Dorsolateral prefrontal cortex (tissue), 120 donors: ENCODE measurements at regions of chr19 and their contacts with region 1.

Region 1: DNA sequence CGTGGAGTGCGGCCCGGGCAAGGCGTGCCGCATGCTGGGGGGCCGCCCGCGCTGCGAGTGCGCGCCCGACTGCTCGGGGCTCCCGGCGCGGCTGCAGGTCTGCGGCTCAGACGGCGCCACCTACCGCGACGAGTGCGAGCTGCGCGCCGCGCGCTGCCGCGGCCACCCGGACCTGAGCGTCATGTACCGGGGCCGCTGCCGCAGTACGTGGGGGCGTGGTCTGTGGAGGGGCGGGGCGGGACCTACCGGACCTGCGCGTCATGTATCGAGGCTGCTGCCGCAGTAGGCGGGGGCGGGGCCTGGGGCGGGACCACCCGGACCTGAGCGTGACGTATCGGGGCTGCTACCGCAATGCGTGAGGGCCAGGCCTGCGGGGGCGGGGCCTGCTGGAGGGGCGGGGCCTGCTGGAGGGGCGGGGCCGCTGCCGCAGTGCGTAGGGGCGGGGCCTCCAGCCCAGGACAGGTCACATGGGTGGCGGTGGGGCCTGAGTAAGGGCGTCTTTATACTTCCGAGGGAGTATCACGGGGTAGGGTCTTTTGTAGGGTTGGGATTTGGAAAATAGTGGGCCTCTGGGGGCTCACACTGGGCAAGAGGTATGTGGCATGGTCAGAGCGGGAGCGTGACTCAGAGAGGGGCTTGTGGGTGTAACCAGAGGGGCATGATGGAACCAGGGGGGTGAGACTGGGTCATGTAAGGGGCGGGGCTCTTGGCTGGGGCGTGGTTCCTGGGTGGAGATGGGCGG is 4.3 kb downstream of the FSTL3 start:
- DNase-seq: peak; percentile 99 to 100 (median 99)
- H3K4me3 ChIP-seq: peak overlapping the region; percentile 45 to 98 (median 77)
- H3K27ac ChIP-seq: peak overlapping the region in 58 of 59 donors; percentile 38 to 99 (median 94)
- H3K27me3 ChIP-seq: peaks cover 0 to 7% (median 0%) of the 10 kb centered on the region in 45 donors
- CTCF ChIP-seq: peak in 51 of 56 donors; percentile 10 to 73 (median 47)

Region 2: DNA sequence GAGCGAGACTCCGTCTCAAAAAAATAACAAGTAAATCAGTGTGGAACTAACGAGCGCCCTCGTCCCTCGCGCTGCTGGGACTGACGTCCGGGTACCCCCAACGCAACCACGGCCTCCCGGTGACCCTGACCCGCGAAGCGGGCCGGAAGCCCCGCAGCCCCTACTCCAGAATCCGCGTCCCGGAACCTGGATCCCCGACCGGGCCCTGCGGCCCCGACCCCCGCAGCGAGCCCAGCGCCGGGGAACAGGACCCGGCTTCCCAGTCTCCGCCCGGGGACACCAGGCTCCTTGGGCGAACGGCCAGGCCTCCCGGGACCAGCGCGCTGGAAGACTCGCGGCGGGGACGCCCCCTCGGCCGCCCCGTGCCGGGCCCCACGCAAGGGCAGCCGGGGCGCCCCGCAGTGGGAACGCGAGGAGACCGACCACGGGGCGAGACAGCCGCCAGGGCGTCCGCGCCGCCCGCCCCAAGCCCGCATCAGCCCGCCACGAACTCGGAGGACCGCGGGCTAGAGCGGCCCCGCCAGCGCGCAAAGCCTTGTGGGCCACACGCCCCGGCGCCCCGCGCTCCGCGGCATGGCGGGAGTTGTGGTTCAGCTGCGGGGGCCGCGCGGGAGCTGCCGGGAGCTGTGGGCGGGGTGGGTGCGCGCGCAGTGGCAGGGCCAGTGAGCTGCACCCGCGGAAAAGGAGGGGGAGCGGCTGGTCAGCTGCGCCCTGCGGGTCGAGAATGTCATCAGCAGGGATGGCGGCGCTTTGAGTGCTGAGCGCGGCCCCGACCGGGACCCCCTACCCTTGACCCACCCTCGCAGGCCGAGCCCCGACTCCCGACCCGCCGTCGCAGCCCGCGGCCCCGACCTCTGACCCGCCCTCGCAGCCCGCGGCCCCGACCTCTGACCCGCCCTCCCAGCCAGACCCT is 191.7 kb before region 1 on chr19:
- intact Hi-C with region 1: no loop called
- DNase-seq: peak; percentile 90 to 97 (median 94)
- H3K4me3 ChIP-seq: peak overlapping the region; percentile 45 to 97 (median 88)
- H3K27ac ChIP-seq: peak overlapping the region; percentile 79 to 100 (median 98)
- H3K27me3 ChIP-seq: peaks cover 0 to 4% (median 0%) of the 10 kb centered on the region in 45 donors
- CTCF ChIP-seq: peak in 42 of 56 donors; percentile 6 to 61 (median 36)

Region 3: GRCh38 chr19:728011-728410 is 47.6 kb after region 1 on chr19:
- intact Hi-C with region 1: loop called (anchors 5 kb)
- DNase-seq: no peak
- H3K4me3 ChIP-seq: no peak overlapping the region
- H3K27ac ChIP-seq: peak overlapping the region in 42 of 59 donors; percentile 17 to 83 (median 60)
- H3K27me3 ChIP-seq: no peaks in the 10 kb centered on the region
- CTCF ChIP-seq: no peak

Region 4: GRCh38 chr19:1094975-1095701 is 414.7 kb after region 1 on chr19 and contains the start of gene POLR2E:
- intact Hi-C with region 1: loop called in 1 of 2 experiments (anchors 10 kb)
- DNase-seq: peak; percentile 98 to 100 (median 99)
- H3K4me3 ChIP-seq: peak within 1 kb of the TSS; percentile 64 to 100 (median 91)
- H3K27ac ChIP-seq: peak within 1 kb of the TSS in 55 of 59 donors; percentile 19 to 92 (median 74)
- H3K27me3 ChIP-seq: no peaks in the 10 kb centered on the region
- CTCF ChIP-seq: peak in 36 of 56 donors; percentile 6 to 53 (median 28)
- total RNA-seq, gene POLR2E: 114 to 230 (median 158) TPM